CD4-positive, alpha-beta T cell (primary cell): ENCODE measurements at regions of chr1 and their contacts with region 1.

Region 1: GRCh38 chr1:12511516-12512468 is 106.2 kb downstream of the DHRS3 start:
- DNase-seq: no peak
- ATAC-seq: no peak
- H3K4me3 ChIP-seq: peak overlapping the region; percentile 46
- H3K4me3 Mint-ChIP-seq: peak overlapping the region; percentile 76
- H3K27ac ChIP-seq: peak overlapping the region; percentile 53 to 89
- H3K27ac Mint-ChIP-seq: peak overlapping the region; percentile 96
- H3K4me1 ChIP-seq: peaks cover 44% of the 10 kb centered on the region
- H3K4me1 Mint-ChIP-seq: peaks cover 61% of the 10 kb centered on the region
- H3K27me3 ChIP-seq: no peaks in the 10 kb centered on the region
- H3K27me3 Mint-ChIP-seq: no peaks in the 10 kb centered on the region
- CTCF ChIP-seq: no peak

Region 2: GRCh38 chr1:12276225-12276624 is 235.6 kb before region 1 on chr1:
- CTCF ChIA-PET with region 1: no interaction called
- POLR2A ChIA-PET with region 1: no interaction called
- intact Hi-C with region 1: no loop called
- DNase-seq: peak in 6 of 14 experiments; percentile 2 to 55 (median 34)
- ATAC-seq: no peak
- H3K4me3 ChIP-seq: no peak overlapping the region
- H3K4me3 Mint-ChIP-seq: no peak overlapping the region
- H3K27ac ChIP-seq: no peak overlapping the region
- H3K27ac Mint-ChIP-seq: no peak overlapping the region
- H3K4me1 ChIP-seq: no peaks in the 10 kb centered on the region
- H3K4me1 Mint-ChIP-seq: peaks cover 5% of the 10 kb centered on the region
- H3K27me3 ChIP-seq: no peaks in the 10 kb centered on the region
- H3K27me3 Mint-ChIP-seq: no peaks in the 10 kb centered on the region
- CTCF ChIP-seq: no peak

Region 3: GRCh38 chr1:12434174-12434573 is 77.6 kb before region 1 on chr1:
- CTCF ChIA-PET with region 1: interaction called, 4 read pairs
- POLR2A ChIA-PET with region 1: interaction called, 26 read pairs
- intact Hi-C with region 1: loop called in 1 of 2 experiments (anchors 1 kb)
- DNase-seq: peak in 12 of 14 experiments; percentile 11 to 82 (median 45)
- ATAC-seq: peak; percentile 78
- H3K4me3 ChIP-seq: no peak overlapping the region
- H3K4me3 Mint-ChIP-seq: peak overlapping the region; percentile 62
- H3K27ac ChIP-seq: peak overlapping the region; percentile 17 to 43
- H3K27ac Mint-ChIP-seq: peak overlapping the region; percentile 84
- H3K4me1 ChIP-seq: peaks cover 55% of the 10 kb centered on the region
- H3K4me1 Mint-ChIP-seq: peaks cover 61% of the 10 kb centered on the region
- H3K27me3 ChIP-seq: no peaks in the 10 kb centered on the region
- H3K27me3 Mint-ChIP-seq: no peaks in the 10 kb centered on the region
- CTCF ChIP-seq: no peak

Region 4: GRCh38 chr1:12448746-12449177 is 63.0 kb before region 1 on chr1:
- CTCF ChIA-PET with region 1: no interaction called
- POLR2A ChIA-PET with region 1: interaction called, 23 read pairs
- intact Hi-C with region 1: loop called (anchors 1 to 5 kb)
- DNase-seq: peak in 1 of 14 experiments; percentile 13
- ATAC-seq: no peak
- H3K4me3 ChIP-seq: peak overlapping the region; percentile 19
- H3K4me3 Mint-ChIP-seq: no peak overlapping the region
- H3K27ac ChIP-seq: peak overlapping the region; percentile 33 to 64
- H3K27ac Mint-ChIP-seq: peak overlapping the region; percentile 85
- H3K4me1 ChIP-seq: peaks cover 59% of the 10 kb centered on the region
- H3K4me1 Mint-ChIP-seq: peaks cover 89% of the 10 kb centered on the region
- H3K27me3 ChIP-seq: no peaks in the 10 kb centered on the region
- H3K27me3 Mint-ChIP-seq: no peaks in the 10 kb centered on the region
- CTCF ChIP-seq: no peak

Region 5: GRCh38 chr1:12454406-12455391 is 57.1 kb before region 1 on chr1:
- CTCF ChIA-PET with region 1: no interaction called
- POLR2A ChIA-PET with region 1: interaction called, 23 read pairs
- intact Hi-C with region 1: loop called (anchors 1 to 5 kb)
- DNase-seq: no peak
- ATAC-seq: no peak
- H3K4me3 ChIP-seq: no peak overlapping the region
- H3K4me3 Mint-ChIP-seq: peak overlapping the region; percentile 48
- H3K27ac ChIP-seq: no peak overlapping the region
- H3K27ac Mint-ChIP-seq: peak overlapping the region; percentile 86
- H3K4me1 ChIP-seq: peaks cover 75% of the 10 kb centered on the region
- H3K4me1 Mint-ChIP-seq: peaks cover 90% of the 10 kb centered on the region
- H3K27me3 ChIP-seq: no peaks in the 10 kb centered on the region
- H3K27me3 Mint-ChIP-seq: no peaks in the 10 kb centered on the region
- CTCF ChIP-seq: no peak